HEK293T (cell line): ENCODE measurements at regions of chr5 and their contacts with region 1.

Region 1: DNA sequence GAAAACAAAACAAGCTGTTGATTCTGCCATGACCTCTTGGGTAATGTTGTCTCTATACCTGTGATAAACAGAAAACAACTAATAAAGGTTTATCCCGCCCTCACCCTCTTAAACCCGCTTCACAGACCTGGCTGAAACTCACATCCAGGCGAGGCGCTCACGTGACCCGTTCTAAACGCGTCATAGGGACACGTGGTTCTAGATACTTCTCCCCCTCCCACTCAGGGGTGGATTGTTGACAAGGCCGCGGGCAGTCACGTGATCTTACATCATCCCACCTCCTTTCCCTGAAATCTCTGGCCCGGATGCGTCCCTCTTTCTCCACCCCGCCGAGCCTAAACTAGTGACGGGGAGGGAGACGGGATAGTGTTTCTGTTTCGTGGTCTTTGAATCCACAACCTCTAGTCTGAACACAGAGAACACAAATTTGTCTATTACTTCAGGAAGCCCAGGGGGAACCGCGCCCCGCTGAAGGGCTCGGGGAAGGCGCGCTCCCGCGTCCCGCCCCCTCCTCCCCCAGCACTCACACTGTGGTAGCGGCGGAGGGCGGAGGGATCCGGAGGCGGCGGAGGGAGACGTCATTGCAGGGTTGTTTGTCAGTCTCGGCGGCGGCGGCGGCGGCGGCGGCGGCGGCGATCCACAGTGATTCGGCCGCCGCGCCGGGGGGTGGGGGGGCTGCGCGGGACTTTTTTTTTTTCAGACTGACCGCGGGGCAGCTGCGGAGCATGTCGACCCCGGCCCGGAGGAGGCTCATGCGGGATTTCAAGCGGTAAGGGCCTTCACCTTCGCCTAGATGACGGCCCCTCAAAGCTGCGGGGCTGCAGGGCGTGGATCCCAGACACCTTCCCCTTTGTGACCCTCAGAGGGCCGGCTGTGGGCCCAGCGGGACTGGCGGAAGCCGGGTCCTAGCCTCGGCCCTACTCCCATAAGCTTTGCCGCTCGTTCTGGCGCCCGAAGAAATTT is at the start of gene UBE2B:
- DNase-seq: peak; percentile 82

Region 2: GRCh38 chr5:134397196-134397595 is 26.0 kb after region 1 on chr5:
- CTCF ChIA-PET with region 1: no interaction called
- POLR2A ChIA-PET with region 1: interaction called, 11 read pairs
- DNase-seq: no peak

Region 3: DNA sequence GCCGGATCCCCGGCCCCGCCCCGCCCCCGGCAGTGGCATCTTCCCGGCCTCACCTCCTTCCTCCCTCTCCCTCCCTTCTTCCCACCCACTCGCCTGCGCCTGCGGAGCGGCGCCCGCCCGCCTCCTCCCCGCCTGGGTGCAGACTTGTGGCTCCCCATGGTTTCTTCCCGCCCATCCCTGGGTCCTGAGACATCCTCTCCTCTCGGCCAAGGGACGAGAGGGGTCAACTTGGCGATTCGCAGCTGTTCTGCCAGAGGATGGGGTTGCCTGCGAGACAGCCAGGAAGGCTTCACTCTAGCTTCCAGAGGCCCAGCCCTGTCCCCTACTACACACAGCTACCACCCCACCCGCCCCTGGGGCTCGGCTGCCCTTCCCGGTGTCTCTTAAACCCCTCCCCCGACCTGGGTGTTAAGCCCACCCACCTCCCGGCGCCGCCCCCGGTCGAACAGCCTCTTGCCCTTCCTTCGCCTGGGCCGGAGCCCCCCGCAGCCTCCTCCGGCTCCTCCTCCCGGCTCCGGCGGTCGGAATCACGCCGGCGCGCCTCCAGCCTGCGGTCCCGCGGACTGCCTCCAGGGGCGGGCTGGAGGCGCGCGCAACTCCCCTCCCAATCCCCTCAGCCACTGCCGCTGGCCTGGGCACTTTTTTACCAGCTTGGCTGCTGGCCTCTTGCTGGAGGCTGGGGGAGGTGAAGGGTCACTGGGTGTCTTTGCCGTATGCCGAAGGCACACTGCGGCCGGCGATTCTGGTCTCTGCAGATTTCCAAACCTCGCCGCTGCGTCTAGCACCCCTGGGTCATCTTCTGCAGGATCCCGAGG is 156.2 kb after region 1 on chr5:
- CTCF ChIA-PET with region 1: interaction called, 3 read pairs
- POLR2A ChIA-PET with region 1: interaction called, 12 read pairs
- DNase-seq: peak; percentile 80

Region 4: GRCh38 chr5:134592141-134592746 is 221.1 kb after region 1 on chr5:
- CTCF ChIA-PET with region 1: no interaction called
- POLR2A ChIA-PET with region 1: no interaction called
- DNase-seq: no peak